ENCODE measurements at regions of chr22 and their contacts with region 1.

Region 1: GRCh38 chr22:17171313-17172171 is 12.5 kb upstream of the HDHD5 start:
- DNase-seq: peak; percentile 92
- H3K4me3 ChIP-seq: peak overlapping the region; percentile 72
- H3K27ac ChIP-seq: peak overlapping the region; percentile 46
- H3K4me1 ChIP-seq: peaks cover 11% of the 10 kb centered on the region
- CTCF ChIP-seq: peak; percentile 90

Region 2: DNA sequence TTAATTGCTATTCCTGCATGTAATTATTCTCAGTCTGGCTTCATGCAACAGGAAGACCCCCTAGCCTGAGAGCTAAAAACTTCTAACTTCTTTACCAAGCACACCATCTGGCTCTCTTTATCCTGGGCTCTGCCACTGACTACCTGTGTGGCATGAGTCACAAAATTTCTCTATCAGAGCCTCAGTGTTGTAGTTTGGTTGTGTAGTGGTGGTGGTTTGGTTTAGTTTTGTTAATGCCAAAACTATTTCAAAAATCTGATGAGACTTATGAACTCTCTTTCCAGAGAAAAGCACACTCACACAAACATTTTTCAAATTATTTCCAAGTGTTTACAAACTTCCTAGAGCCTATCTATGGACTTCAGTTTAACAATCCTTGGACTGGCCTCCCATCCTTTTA is 94.3 kb before region 1 on chr22:
- CTCF ChIA-PET with region 1: no interaction called
- POLR2A ChIA-PET with region 1: no interaction called
- intact Hi-C with region 1: loop called (anchors 1 kb)
- DNase-seq: no peak
- H3K4me3 ChIP-seq: no peak overlapping the region
- H3K27ac ChIP-seq: no peak overlapping the region
- H3K4me1 ChIP-seq: no peaks in the 10 kb centered on the region
- CTCF ChIP-seq: no peak

Region 3: DNA sequence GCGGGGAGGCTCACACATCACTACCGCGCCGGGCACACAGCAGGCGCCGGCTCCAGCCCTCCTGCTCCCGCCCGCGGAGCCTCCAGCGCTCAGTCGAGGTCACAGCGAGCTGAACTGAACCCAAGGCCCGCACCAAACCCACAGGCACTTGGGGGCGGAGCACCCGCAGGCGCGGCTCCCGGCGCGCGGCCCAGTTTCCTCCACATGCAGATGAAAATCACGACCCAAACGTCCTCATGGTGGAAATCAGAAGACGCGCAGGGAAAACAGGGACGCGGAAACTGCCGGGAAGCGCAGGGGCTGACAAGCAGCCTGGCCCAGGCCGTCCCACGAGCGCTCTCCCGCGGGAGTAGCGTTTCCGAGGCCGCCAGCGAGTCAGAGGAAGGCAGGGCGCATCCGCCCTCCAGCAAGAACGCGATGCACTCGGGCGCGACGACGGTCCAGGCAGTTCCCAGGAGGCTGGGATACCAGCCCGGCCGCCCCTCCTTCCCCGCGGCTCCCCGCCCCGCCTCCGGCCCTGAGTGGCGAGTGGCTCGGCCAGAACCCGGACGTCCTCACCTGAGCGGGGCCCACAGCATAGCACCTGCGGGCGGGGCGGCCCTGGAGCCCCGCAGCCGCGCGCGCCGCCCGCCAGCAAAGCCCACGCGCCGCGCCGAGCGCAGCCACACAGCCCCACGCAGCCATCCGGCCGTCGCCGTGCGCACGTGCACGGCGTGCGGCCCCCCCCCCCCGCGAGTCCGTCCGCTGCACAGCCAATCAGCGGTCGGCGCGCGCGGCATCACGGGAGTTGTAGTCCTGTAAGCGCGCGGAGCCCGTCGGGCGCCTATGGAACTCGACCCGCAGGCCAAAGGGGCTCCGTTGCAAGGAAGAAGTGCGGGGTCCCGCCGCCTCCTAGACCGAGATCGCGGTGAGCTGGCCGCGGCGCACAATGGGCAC is 12.7 kb before region 1 on chr22 and contains the start of gene HDHD5:
- CTCF ChIA-PET with region 1: interaction called, 5 read pairs
- POLR2A ChIA-PET with region 1: interaction called, 9 read pairs
- intact Hi-C with region 1: loop called (anchors 2 kb)
- DNase-seq: peak; percentile 91
- H3K4me3 ChIP-seq: peak within 1 kb of the TSS; percentile 83
- H3K27ac ChIP-seq: peak within 1 kb of the TSS; percentile 47
- H3K4me1 ChIP-seq: peaks cover 26% of the 10 kb centered on the region
- CTCF ChIP-seq: no peak
- total RNA-seq, gene HDHD5: 77.3 and 84.6 TPM in 2 replicates

Region 4: DNA sequence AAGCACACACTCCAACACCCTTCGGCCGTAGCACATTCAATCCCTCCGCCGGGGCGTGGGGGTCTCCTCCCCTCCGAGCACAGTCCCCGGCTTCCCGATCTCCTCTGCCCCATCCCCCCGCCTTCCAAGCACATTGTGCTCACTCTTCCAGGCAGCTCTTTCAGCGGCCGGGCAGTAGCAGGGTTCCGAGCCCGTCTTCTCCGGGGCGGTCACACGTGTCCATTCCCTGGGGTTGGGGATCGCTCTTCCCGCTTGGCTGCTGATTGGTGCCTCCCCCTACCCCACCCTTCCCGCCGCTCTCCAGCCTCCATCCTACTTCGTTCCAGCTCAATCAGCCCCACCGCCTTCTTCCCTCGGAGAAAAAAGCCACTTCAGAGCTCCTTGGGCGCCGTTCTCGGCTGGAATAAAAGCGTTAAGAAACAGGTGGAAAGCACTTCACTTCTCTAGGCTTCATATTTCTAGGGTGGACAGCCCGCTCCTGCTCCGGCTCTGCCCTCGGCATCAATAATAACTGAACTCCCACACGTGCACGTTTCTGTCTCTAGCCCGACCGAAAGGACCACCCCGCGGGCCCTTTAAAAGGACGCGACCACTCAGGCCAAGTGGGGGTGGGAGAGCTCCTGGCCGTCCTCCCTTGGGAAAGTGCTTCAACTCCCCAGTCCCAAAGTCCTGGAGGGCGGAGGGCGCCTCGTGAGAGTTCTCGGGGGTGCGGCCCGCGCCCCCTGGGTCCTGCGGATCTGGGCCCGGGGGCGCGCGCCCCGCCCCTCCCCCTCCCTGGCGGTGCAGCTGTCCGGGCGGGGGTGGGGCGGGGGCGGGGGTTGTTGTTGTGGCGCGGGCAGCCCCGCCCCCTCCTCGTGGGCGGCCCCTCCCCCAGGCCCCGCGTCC is 197.3 kb after region 1 on chr22:
- CTCF ChIA-PET with region 1: no interaction called
- POLR2A ChIA-PET with region 1: no interaction called
- intact Hi-C with region 1: loop called (anchors 5 kb)
- DNase-seq: peak; percentile 71
- H3K4me3 ChIP-seq: peak overlapping the region; percentile 66
- H3K27ac ChIP-seq: no peak overlapping the region
- H3K4me1 ChIP-seq: peaks cover 14% of the 10 kb centered on the region
- CTCF ChIP-seq: no peak

Region 5: DNA sequence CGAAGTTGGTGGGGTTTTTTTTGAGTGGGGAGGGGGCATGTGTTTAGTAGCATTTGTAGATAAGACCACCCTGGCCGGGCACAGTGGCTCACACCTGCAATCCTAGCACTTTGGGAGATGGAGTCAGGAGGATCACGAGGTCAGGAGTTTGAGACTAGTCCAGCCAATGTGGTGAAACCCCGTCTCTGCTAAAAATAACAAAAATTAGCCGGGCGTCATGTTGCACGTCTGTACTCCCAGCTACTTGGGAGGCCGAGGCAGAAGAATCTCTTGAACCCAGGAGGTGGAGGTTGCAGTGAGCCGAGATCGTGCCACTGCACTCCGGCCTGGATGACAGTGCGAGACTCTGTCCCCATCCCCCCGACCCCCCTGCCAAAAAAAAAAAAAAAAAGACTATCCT is 232.4 kb after region 1 on chr22:
- CTCF ChIA-PET with region 1: no interaction called
- POLR2A ChIA-PET with region 1: no interaction called
- intact Hi-C with region 1: no loop called
- DNase-seq: no peak
- H3K4me3 ChIP-seq: no peak overlapping the region
- H3K27ac ChIP-seq: no peak overlapping the region
- H3K4me1 ChIP-seq: no peaks in the 10 kb centered on the region
- CTCF ChIP-seq: no peak